ENCODE measurements at regions of chr16 and their contacts with region 1.

Region 1: GRCh38 chr16:57244767-57245471 is at the start of gene ARL2BP:
- DNase-seq: peak; percentile 96 to 100 (median 99)
- H3K4me3 ChIP-seq: peak within 1 kb of the TSS; percentile 68 to 98 (median 90)
- H3K27ac ChIP-seq: peak within 1 kb of the TSS; percentile 59 to 97 (median 94)
- H3K27me3 ChIP-seq: no peaks in the 10 kb centered on the region
- CTCF ChIP-seq: peak in 47 of 56 donors; percentile 8 to 61 (median 37)
- total RNA-seq, gene ARL2BP: 36.8 to 68.6 (median 51.1) TPM

Region 2: GRCh38 chr16:57084257-57084770 is 160.6 kb before region 1 on chr16:
- intact Hi-C with region 1: loop called (anchors 5 to 10 kb)
- DNase-seq: peak in 9 of 10 donors; percentile 48 to 83 (median 73)
- H3K4me3 ChIP-seq: peak overlapping the region in 1 of 59 donors; percentile 12
- H3K27ac ChIP-seq: peak overlapping the region in 33 of 59 donors; percentile 1 to 76 (median 45)
- H3K27me3 ChIP-seq: no peaks in the 10 kb centered on the region
- CTCF ChIP-seq: peak; percentile 91 to 100 (median 99)

Region 3: GRCh38 chr16:57262841-57263540 is 18.1 kb after region 1 on chr16:
- intact Hi-C with region 1: loop called in 1 of 2 experiments (anchors 2 kb)
- DNase-seq: peak in 8 of 10 donors; percentile 58 to 76 (median 72)
- H3K4me3 ChIP-seq: peak overlapping the region in 1 of 59 donors; percentile 2
- H3K27ac ChIP-seq: peak overlapping the region; percentile 49 to 99 (median 95)
- H3K27me3 ChIP-seq: no peaks in the 10 kb centered on the region
- CTCF ChIP-seq: no peak

Region 4: DNA sequence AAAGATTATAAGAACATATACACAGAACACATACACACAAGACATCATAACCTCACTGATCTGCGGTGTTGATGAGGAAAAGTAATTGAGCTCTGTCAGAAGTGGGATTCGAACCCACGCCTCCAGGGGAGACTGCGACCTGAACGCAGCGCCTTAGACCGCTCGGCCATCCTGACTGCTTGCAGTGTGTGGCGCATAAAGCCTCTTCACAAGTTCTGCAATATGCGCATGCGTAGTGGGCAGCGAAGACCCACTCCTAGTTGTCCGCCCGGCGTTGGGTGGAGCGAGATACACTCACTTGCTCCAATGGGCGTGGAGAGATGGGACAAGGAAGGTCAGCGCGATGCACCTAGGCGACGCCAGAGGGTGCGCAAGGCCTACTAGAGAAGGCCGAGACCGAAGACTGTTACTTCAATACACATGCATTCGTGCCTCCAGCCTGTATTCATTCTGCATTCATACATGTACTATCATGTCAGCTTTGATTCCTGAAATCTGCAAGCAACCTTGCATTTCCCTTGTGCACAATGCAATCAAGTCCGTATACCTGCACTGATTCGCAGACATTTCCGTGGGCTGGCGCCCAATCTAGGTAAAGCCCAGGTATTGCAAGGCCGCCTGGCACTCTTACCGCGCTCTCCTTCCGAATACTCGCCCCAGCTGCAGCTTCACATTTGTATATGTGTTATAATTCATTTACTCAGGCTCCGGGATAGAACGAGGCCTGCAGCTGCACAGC is 55.6 kb after region 1 on chr16:
- intact Hi-C with region 1: loop called (anchors 1 kb)
- DNase-seq: peak; percentile 97 to 100 (median 99)
- H3K4me3 ChIP-seq: peak overlapping the region; percentile 29 to 73 (median 60)
- H3K27ac ChIP-seq: peak overlapping the region; percentile 81 to 99 (median 95)
- H3K27me3 ChIP-seq: no peaks in the 10 kb centered on the region
- CTCF ChIP-seq: peak; percentile 89 to 100 (median 98)

Region 5: DNA sequence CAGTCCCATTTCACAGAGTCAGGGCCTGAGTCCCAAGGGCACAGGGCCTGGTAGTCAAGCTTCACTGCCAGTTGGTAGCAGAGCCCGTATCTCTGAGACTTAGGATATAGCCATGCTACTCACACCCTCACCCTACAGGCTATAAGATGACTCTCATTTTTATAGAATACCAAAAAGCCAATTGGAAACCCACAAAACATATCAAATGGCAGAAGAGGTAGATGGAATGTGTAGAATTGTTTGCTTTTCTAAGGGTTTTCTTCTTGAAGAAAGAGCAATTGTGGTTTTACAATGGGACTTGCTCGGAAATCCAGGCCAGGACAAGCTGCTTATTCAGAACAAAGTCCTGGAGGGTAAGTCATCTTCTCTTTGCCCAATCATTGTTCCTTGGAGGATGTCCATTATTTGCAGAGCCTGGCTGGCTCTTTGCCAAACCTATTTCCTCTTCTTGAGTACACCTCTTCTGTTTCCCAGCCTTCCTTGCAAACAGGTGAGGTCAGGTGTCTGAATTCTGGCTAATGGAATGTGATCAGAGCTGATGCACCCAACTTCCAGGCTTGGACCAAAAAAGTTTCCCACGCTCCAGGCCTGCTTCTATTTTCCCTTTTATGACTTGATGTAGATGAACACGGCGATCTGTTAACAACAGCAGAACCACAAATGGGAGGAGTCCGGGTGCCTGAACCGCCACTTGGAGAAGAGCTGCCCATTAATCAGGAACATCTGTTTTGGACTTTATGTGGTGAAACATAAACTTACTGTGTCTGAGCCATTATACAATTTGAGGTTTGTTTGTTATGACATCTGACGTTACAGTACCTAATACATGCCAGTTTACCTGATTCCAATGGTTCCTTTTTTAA is 96.8 kb after region 1 on chr16:
- intact Hi-C with region 1: no loop called
- DNase-seq: no peak
- H3K4me3 ChIP-seq: no peak overlapping the region
- H3K27ac ChIP-seq: no peak overlapping the region
- H3K27me3 ChIP-seq: no peaks in the 10 kb centered on the region
- CTCF ChIP-seq: no peak

Region 6: GRCh38 chr16:57462209-57462977 is 217.5 kb after region 1 on chr16 and contains the start of gene POLR2C:
- intact Hi-C with region 1: loop called in 1 of 2 experiments (anchors 5 kb)
- DNase-seq: peak; percentile 74 to 89 (median 84)
- H3K4me3 ChIP-seq: peak within 1 kb of the TSS; percentile 80 to 100 (median 93)
- H3K27ac ChIP-seq: peak within 1 kb of the TSS in 57 of 59 donors; percentile 37 to 95 (median 88)
- H3K27me3 ChIP-seq: no peaks in the 10 kb centered on the region
- CTCF ChIP-seq: peak; percentile 94 to 100 (median 98)
- total RNA-seq, gene POLR2C: 47.5 to 83.3 (median 64.4) TPM